Heart left ventricle (tissue), 16 donors: ENCODE measurements at regions of chr6 and their contacts with region 1.

Region 1: DNA sequence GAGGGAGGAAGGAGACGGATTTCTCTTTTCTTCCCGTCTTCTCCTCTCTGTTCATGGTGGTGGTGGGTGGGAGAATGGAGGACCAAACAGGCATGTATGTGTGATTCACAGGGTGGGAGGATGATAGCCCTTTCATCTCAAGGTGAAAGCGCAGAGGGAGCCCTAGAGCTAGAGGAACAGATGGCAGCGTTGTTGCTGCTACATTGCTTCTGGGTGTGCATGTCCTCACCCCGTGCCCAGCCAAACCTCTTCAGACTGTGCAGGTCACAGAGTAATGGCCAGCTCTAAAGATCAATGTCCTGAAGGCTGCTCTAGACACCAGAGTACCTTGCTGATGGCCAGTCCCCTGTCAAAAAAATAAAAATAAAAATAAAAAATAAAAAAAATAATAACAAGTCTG is 301.8 kb downstream of the TBC1D7 start:
- DNase-seq: peak in 3 of 5 donors; percentile 23 to 56 (median 45)
- ATAC-seq: peak; percentile 78 to 86 (median 84)
- H3K4me3 ChIP-seq: no peak overlapping the region
- H3K27ac ChIP-seq: peak overlapping the region in 9 of 12 donors; percentile 20 to 61 (median 31)
- H3K4me1 ChIP-seq: peaks cover 0 to 46% (median 19%) of the 10 kb centered on the region in 12 donors
- H3K27me3 ChIP-seq: no peaks in the 10 kb centered on the region
- CTCF ChIP-seq: peak in 2 of 12 donors; percentile 6 to 7
- POLR2A ChIP-seq: no peak

Region 2: DNA sequence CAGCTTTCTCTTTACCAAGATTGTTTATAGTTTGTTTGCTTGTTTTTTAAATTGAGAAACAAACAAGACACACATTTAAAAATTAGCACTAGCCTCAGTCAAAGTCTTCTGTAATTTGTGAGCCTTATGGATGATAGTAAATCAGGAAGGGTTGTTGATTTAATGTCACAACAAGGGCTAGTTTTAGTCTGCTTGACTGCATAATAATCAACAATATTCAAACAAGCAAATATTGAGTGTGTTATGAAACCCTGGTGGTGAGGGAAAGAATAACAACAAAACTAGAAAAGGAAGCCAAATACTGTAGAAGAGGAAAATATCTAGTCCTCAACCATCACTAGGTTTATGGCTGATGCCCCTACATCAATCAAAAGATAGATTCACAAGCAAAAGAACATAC is 73.2 kb after region 1 on chr6:
- intact Hi-C with region 1: no loop called
- DNase-seq: no peak
- ATAC-seq: no peak
- H3K4me3 ChIP-seq: no peak overlapping the region
- H3K27ac ChIP-seq: no peak overlapping the region
- H3K4me1 ChIP-seq: peaks cover 0 to 58% (median 18%) of the 10 kb centered on the region in 12 donors
- H3K27me3 ChIP-seq: no peaks in the 10 kb centered on the region
- CTCF ChIP-seq: peak in 4 of 12 donors; percentile 6 to 37 (median 16)
- POLR2A ChIP-seq: no peak

Region 3: GRCh38 chr6:13113981-13114593 is 87.5 kb after region 1 on chr6:
- intact Hi-C with region 1: loop called in 2 of 10 experiments (anchors 10 kb)
- DNase-seq: no peak
- ATAC-seq: peak in 3 of 4 donors; percentile 48 to 75 (median 75)
- H3K4me3 ChIP-seq: no peak overlapping the region
- H3K27ac ChIP-seq: no peak overlapping the region
- H3K4me1 ChIP-seq: peaks cover 0 to 39% (median 13%) of the 10 kb centered on the region in 12 donors
- H3K27me3 ChIP-seq: no peaks in the 10 kb centered on the region
- CTCF ChIP-seq: no peak
- POLR2A ChIP-seq: no peak